ENCODE measurements at regions of chr17 and their contacts with region 1.

Region 1: GRCh38 chr17:7351665-7352501 is at the start of gene KCTD11:
- DNase-seq: peak; percentile 90 to 94 (median 92)
- H3K4me3 ChIP-seq: peak within 1 kb of the TSS in 3 of 4 donors; percentile 47 to 78 (median 68)
- H3K27ac ChIP-seq: peak within 1 kb of the TSS; percentile 95 to 99 (median 98)
- H3K4me1 ChIP-seq: peaks cover 21 to 39% of the 10 kb centered on the region in 2 donors
- H3K27me3 ChIP-seq: no peaks in the 10 kb centered on the region
- CTCF ChIP-seq: peak in 2 of 6 experiments; percentile 17 to 47
- POLR2A ChIP-seq: peak in 1 of 2 donors; percentile 82
- total RNA-seq, gene KCTD11: 6.8 to 13.8 (median 11.5) TPM

Region 2: DNA sequence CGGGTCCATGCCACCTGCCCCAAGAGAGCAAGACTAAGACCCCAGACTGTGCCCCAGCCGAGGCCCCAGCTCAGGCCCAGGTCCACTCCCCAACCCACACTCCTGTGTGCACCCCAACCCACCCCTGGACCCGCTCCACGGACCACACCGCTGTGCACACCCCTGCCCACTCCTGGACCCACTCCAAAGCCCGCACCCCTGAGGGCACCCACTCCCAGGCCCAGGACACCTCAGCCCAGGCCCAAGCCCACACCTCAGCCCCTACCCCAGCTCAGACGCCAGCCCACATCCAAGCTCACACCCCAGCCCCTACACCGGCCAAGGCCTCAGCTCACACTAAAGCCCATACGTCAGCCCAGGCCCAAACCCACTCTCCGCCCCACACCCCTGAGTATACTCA is 77.8 kb after region 1 on chr17:
- intact Hi-C with region 1: loop called (anchors 2 to 5 kb)
- DNase-seq: no peak
- H3K4me3 ChIP-seq: no peak overlapping the region
- H3K27ac ChIP-seq: no peak overlapping the region
- H3K4me1 ChIP-seq: peaks cover under 1 to 2% of the 10 kb centered on the region in 2 donors
- H3K27me3 ChIP-seq: no peaks in the 10 kb centered on the region
- CTCF ChIP-seq: no peak
- POLR2A ChIP-seq: no peak

Region 3: DNA sequence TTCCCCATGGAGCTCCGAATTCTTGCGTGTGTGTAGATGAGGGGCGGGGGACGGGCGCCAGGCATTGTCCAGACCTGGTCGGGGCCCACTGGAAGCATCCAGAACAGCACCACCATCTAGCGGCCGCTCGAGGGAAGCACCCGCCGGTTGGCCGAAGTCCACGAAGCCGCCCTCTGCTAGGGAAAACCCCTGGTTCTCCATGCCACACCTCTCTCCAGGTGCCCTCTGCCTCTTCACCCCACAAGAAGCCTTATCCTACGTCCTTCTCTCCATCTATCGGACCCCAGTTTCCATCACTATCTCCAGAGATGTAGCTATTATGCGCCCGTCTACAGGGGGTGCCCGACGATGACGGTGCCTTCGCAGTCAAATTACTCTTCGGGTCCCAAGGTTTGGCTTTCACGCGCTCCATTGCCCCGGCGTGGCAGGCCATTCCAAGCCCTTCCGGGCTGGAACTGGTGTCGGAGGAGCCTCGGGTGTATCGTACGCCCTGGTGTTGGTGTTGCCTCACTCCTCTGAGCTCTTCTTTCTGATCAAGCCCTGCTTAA is 209.2 kb after region 1 on chr17:
- intact Hi-C with region 1: loop called (anchors 10 kb)
- DNase-seq: peak; percentile 90 to 97 (median 95)
- H3K4me3 ChIP-seq: peak overlapping the region; percentile 28 to 74 (median 57)
- H3K27ac ChIP-seq: peak overlapping the region; percentile 75 to 97 (median 92)
- H3K4me1 ChIP-seq: peaks cover 35 to 58% of the 10 kb centered on the region in 2 donors
- H3K27me3 ChIP-seq: no peaks in the 10 kb centered on the region
- CTCF ChIP-seq: peak; percentile 70 to 96 (median 92)
- POLR2A ChIP-seq: no peak

Measured in adrenal gland (tissue), 19 donors.